Activated B cell treated with CpG ODN at 0.5 μM for 24 hours (primary cell): ENCODE measurements at regions of chr17 and their contacts with region 1.

Region 1: DNA sequence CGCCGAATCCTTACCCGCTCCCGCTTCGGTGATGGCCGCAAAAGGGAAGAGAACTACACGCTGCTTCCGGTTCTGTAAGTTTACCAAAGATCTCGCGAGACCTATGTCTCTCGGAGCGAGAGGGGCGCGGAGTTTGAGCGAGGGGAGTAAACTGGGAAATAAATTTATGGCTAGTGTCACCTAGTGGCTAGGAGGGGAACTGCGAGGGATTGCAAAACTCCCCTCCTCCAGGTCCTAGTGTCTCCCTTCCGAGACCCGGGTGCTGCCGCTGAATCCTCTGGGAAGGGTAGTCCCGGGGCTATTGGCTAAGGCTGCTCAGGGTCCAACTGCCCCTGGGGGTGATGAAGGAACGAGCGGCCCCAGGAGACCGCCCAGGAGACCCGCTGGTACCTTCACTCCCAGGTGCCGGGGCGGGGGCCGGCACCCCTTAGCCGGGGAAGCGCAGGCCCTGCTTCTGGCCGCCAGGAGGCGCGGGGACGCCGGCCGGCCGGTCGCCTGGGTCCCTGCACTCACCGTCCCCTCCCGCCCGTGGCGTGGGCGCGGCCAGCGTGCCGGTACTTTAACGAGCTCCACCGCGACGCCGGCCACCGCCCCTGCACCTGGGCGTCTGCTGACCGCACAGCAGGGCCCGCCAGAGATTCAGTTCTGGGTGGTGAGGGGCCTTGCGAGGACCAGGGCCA is at the start of gene RPL26:
- DNase-seq: peak; percentile 94
- ATAC-seq: peak; percentile 90
- H3K4me3 Mint-ChIP-seq: peak within 1 kb of the TSS; percentile 98
- H3K27ac Mint-ChIP-seq: peak within 1 kb of the TSS; percentile 95
- H3K4me1 Mint-ChIP-seq: peaks cover 56% of the 10 kb centered on the region
- H3K27me3 Mint-ChIP-seq: no peaks in the 10 kb centered on the region
- CTCF ChIP-seq: peak; percentile 87
- total RNA-seq, gene RPL26: 3,512 and 4,174 TPM in 2 replicates

Region 2: GRCh38 chr17:7014261-7014994 is 1368.9 kb before region 1 on chr17:
- CTCF ChIA-PET with region 1: no interaction called
- POLR2A ChIA-PET with region 1: no interaction called
- intact Hi-C with region 1: loop called (anchors 10 kb)
- DNase-seq: peak; percentile 96
- ATAC-seq: peak; percentile 84
- H3K4me3 Mint-ChIP-seq: peak overlapping the region; percentile 95
- H3K27ac Mint-ChIP-seq: peak overlapping the region; percentile 100
- H3K4me1 Mint-ChIP-seq: peaks cover 61% of the 10 kb centered on the region
- H3K27me3 Mint-ChIP-seq: no peaks in the 10 kb centered on the region
- CTCF ChIP-seq: no peak

Region 3: DNA sequence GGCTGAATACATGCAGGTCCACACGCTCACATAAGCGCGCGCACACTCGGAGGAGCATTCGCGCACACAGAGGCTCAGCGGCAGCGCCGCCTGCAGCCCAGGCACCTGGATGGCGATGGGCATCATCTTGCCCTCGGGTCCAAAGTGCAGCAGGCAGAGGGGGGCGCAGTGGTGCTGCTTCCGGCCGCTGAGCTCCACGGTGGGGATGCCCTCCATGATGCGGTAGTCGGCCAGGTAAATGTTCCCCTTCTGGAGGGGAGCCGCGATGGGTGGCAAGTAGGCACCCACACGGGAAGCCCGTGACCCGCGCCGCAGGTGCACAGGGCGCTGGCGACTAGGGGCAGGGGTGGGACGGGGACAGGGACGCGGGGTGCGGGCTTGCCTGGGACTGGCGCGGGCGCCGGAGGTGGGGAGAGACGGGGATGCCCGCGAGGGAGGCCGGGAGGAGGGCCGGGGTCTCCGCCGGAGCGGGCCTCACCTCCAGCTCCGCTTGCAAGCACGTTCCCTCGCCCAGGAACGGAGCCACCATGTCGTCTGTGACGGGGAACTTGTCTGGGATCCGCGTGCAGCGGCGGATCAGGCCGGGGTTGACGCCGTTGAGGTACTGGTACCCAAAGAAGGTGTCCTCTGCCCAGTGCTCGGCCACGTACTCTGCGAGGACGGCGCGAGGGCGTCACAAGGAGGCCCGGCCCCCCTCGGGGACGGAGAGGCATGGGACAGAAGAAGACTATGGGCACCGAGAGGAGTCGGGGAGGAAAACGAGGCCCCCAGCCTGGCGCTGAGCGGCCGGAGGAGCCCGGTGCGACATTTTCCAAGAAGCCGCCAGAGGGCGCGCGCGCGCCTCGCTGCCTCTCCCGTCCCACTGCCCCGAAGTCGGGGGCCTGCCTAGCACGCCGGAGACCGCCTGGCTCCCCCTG is 303.7 kb before region 1 on chr17:
- CTCF ChIA-PET with region 1: interaction called, 4 read pairs
- POLR2A ChIA-PET with region 1: no interaction called
- intact Hi-C with region 1: loop called (anchors 5 kb)
- DNase-seq: peak; percentile 82
- ATAC-seq: peak; percentile 85
- H3K4me3 Mint-ChIP-seq: peak overlapping the region; percentile 89
- H3K27ac Mint-ChIP-seq: peak overlapping the region; percentile 83
- H3K4me1 Mint-ChIP-seq: peaks cover 17% of the 10 kb centered on the region
- H3K27me3 Mint-ChIP-seq: peaks cover 13% of the 10 kb centered on the region
- CTCF ChIP-seq: no peak

Region 4: GRCh38 chr17:8100111-8100510 is 283.2 kb before region 1 on chr17:
- CTCF ChIA-PET with region 1: no interaction called
- POLR2A ChIA-PET with region 1: no interaction called
- intact Hi-C with region 1: no loop called
- DNase-seq: no peak
- ATAC-seq: no peak
- H3K4me3 Mint-ChIP-seq: no peak overlapping the region
- H3K27ac Mint-ChIP-seq: no peak overlapping the region
- H3K4me1 Mint-ChIP-seq: no peaks in the 10 kb centered on the region
- H3K27me3 Mint-ChIP-seq: peaks cover 5% of the 10 kb centered on the region
- CTCF ChIP-seq: no peak

Region 5: DNA sequence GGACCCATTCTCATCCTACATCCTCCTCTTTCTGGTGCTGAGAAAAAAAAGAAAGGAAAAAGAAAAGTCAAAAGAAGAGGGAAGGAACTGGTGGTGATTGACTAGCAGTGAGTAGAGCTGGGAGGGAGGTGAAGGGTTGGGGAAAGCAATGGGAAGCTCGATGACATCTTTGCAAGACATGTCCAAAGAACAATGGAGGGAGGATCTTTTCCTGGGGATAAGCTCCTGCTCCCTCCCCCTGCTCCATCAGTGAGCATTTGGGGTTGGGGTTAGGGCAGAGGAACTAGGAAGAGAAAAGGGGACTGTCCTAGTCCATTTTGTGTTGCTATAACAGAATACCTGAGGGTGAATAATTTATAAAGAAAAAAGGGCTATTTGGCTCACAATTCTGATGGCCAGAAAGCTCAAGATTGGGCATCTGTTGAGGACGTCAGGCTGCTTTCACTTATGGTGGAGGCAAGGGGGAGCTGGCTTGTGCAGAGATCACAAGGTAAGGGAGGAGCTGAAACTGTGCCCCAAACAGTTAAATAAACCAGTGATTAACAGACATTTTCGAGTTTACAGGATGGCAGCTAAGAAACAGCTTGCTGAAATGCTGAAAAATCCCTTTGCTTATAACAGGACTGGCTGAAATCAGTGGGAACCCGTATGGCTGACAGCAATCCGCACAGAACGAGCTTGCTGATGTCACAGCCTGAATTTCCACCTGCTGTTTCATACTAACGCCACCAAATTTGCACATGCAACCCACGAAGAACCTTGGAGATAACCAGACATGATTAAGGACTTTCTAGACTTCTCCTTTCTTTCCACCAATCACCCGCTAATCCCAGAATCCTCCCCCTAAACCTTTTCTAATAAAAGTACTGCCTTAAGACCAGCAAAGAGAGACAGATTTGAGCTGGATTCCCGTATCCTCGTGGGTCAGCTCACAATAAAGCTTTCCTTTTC is 45.2 kb before region 1 on chr17:
- CTCF ChIA-PET with region 1: no interaction called
- POLR2A ChIA-PET with region 1: no interaction called
- intact Hi-C with region 1: no loop called
- DNase-seq: no peak
- ATAC-seq: no peak
- H3K4me3 Mint-ChIP-seq: no peak overlapping the region
- H3K27ac Mint-ChIP-seq: no peak overlapping the region
- H3K4me1 Mint-ChIP-seq: peaks cover 8% of the 10 kb centered on the region
- H3K27me3 Mint-ChIP-seq: peaks cover 3% of the 10 kb centered on the region
- CTCF ChIP-seq: no peak

Region 6: GRCh38 chr17:8532021-8532420 is 148.7 kb after region 1 on chr17:
- CTCF ChIA-PET with region 1: no interaction called
- POLR2A ChIA-PET with region 1: no interaction called
- intact Hi-C with region 1: no loop called
- DNase-seq: no peak
- ATAC-seq: no peak
- H3K4me3 Mint-ChIP-seq: no peak overlapping the region
- H3K27ac Mint-ChIP-seq: no peak overlapping the region
- H3K4me1 Mint-ChIP-seq: no peaks in the 10 kb centered on the region
- H3K27me3 Mint-ChIP-seq: no peaks in the 10 kb centered on the region
- CTCF ChIP-seq: no peak

Region 7: DNA sequence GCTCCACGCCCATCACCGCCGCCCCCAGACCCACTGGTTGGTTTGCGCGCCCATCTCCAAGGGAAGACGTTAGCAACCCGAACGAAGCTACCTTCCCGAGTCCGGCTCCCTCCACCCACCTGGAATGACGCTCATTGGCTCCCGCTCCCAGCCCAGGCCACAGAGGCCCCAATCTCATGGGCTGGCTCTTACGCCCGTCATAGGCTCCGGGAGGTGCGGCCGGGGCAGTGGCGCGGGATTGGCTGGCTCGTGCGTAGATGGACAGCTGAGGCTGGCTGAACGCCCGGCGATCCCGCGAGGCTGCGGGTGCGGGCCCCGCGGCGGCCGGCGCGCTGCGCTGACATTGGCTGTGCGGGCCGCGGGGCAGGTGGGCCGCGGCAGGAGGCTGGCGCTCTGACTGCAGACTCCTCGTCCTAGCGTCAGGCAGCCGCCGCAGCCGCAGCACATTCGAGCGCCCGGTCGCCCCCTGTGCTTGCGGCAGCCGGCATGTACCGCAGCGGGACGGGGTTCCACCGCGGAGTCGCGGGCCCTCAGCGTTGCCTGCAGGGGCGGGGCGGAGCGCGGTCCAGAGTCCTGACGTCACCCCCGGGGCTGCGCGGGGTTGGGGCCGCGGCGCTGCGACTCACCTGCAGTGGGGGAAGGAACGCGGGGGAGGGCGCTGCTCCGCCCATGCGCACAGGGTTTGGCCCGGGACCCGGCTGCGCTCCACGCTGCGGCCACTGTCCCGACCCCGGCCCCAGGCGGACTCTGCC is 247.7 kb after region 1 on chr17:
- CTCF ChIA-PET with region 1: no interaction called
- POLR2A ChIA-PET with region 1: no interaction called
- intact Hi-C with region 1: loop called (anchors 1 kb)
- DNase-seq: peak; percentile 78
- ATAC-seq: peak; percentile 97
- H3K4me3 Mint-ChIP-seq: peak overlapping the region; percentile 97
- H3K27ac Mint-ChIP-seq: no peak overlapping the region
- H3K4me1 Mint-ChIP-seq: peaks cover 19% of the 10 kb centered on the region
- H3K27me3 Mint-ChIP-seq: peaks cover 37% of the 10 kb centered on the region
- CTCF ChIP-seq: no peak

Region 8: GRCh38 chr17:8894673-8895578 is 511.6 kb after region 1 on chr17:
- CTCF ChIA-PET with region 1: no interaction called
- POLR2A ChIA-PET with region 1: no interaction called
- intact Hi-C with region 1: loop called (anchors 1 kb)
- DNase-seq: no peak
- ATAC-seq: peak; percentile 55
- H3K4me3 Mint-ChIP-seq: no peak overlapping the region
- H3K27ac Mint-ChIP-seq: peak overlapping the region; percentile 0
- H3K4me1 Mint-ChIP-seq: peaks cover 51% of the 10 kb centered on the region
- H3K27me3 Mint-ChIP-seq: no peaks in the 10 kb centered on the region
- CTCF ChIP-seq: no peak

Region 9: DNA sequence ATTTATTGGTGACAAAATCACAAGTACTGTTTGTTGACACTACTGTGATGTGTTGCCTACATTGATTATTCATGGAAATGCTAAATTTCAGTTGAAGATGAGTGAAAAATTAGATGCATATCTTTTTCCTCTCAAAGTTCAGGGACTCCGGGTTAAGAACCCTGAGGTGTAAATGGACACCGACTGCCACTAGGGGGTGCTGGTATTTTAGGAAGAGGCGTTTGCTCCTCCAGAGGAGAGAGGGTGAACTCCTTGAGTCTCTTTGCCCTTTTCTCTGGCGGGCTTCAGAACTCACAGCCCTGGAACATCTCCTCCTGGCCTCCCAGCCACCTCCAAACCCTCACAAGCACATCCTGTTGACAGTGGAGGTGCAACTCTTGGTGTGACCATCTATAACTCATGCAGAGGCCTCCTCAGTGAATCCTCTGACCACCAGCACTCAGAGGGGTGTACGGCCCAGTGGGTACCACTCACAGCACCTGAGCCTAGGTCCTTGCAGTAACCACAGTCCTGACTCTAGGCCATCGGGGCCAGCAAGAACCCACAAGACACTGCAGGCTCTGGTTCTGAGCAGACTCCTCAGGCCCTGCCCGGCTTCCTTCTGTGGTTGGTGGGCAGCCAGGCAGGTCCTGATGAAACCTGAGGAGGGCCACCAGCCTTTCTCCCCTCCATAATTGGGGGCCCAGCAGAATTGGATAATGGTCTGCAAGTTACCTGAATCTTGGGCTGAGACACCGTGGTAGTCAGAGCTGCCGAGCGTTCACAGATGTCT is 608.4 kb after region 1 on chr17:
- CTCF ChIA-PET with region 1: no interaction called
- POLR2A ChIA-PET with region 1: no interaction called
- intact Hi-C with region 1: loop called (anchors 10 kb)
- DNase-seq: no peak
- ATAC-seq: peak; percentile 53
- H3K4me3 Mint-ChIP-seq: no peak overlapping the region
- H3K27ac Mint-ChIP-seq: no peak overlapping the region
- H3K4me1 Mint-ChIP-seq: peaks cover 2% of the 10 kb centered on the region
- H3K27me3 Mint-ChIP-seq: peaks cover 2% of the 10 kb centered on the region
- CTCF ChIP-seq: peak; percentile 66